Activated B cell treated with CpG ODN at 0.5 μM for 24 hours (primary cell): ENCODE measurements at regions of chr2 and their contacts with region 1.

Region 1: GRCh38 chr2:147082850-147083522 is 761.8 kb upstream of the ACVR2A start:
- DNase-seq: no peak
- ATAC-seq: peak; percentile 37
- H3K4me3 Mint-ChIP-seq: no peak overlapping the region
- H3K27ac Mint-ChIP-seq: no peak overlapping the region
- H3K4me1 Mint-ChIP-seq: no peaks in the 10 kb centered on the region
- H3K27me3 Mint-ChIP-seq: no peaks in the 10 kb centered on the region
- CTCF ChIP-seq: no peak

Region 2: GRCh38 chr2:147045113-147045512 is 37.9 kb before region 1 on chr2:
- CTCF ChIA-PET with region 1: interaction called, 7 read pairs
- POLR2A ChIA-PET with region 1: no interaction called
- intact Hi-C with region 1: loop called (anchors 1 kb)
- DNase-seq: no peak
- ATAC-seq: no peak
- H3K4me3 Mint-ChIP-seq: no peak overlapping the region
- H3K27ac Mint-ChIP-seq: no peak overlapping the region
- H3K4me1 Mint-ChIP-seq: no peaks in the 10 kb centered on the region
- H3K27me3 Mint-ChIP-seq: no peaks in the 10 kb centered on the region
- CTCF ChIP-seq: no peak

Region 3: GRCh38 chr2:147331790-147332419 is 248.9 kb after region 1 on chr2:
- CTCF ChIA-PET with region 1: no interaction called
- POLR2A ChIA-PET with region 1: no interaction called
- intact Hi-C with region 1: loop called (anchors 2 kb)
- DNase-seq: no peak
- ATAC-seq: no peak
- H3K4me3 Mint-ChIP-seq: no peak overlapping the region
- H3K27ac Mint-ChIP-seq: no peak overlapping the region
- H3K4me1 Mint-ChIP-seq: peaks cover 4% of the 10 kb centered on the region
- H3K27me3 Mint-ChIP-seq: no peaks in the 10 kb centered on the region
- CTCF ChIP-seq: no peak

Region 4: DNA sequence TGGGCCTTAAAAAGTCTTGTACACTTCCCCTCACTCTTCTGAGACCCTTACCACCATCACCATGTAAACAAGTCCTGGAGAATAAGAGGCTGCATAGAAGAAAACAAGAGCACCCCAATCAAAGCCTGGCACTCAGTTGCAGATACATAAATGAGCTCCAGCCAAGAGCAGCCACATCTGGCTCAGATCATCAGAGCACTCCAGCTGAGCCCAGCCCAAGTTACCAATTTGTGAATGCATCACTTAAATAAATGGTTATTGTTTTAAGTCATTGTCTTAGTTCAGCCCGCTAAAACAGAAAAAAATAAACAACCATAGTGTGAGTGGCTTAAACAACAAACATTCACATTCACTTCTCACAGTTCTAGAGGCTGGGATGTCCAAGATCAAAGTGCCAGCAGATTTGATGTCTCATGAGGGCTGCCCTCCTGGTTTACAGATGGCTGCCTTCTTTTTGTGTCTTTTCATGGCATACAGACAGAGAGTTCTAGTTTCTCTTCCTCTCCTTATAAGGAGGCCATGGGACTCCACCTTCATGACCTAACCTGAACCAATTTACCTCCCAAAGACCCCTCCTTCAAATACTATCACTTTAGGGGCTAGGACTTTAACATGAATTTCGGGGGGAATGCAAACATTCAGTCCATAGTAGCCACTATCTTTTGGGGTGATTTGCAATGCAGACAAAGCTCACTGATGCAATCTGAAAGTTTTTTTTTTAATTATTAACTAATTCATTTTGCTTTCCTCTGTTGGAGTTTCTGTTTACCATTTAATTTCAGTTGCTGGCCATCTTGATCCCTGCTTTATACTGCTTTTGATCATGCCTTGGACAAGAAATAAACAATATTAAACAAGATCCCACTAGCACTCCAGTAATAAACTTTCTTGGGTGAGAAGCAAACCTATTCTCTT is 574.4 kb after region 1 on chr2:
- CTCF ChIA-PET with region 1: no interaction called
- POLR2A ChIA-PET with region 1: no interaction called
- intact Hi-C with region 1: loop called (anchors 2 kb)
- DNase-seq: no peak
- ATAC-seq: no peak
- H3K4me3 Mint-ChIP-seq: no peak overlapping the region
- H3K27ac Mint-ChIP-seq: no peak overlapping the region
- H3K4me1 Mint-ChIP-seq: no peaks in the 10 kb centered on the region
- H3K27me3 Mint-ChIP-seq: no peaks in the 10 kb centered on the region
- CTCF ChIP-seq: no peak